A673 (cell line): ENCODE measurements at regions of chr4 and their contacts with region 1.

Region 1: DNA sequence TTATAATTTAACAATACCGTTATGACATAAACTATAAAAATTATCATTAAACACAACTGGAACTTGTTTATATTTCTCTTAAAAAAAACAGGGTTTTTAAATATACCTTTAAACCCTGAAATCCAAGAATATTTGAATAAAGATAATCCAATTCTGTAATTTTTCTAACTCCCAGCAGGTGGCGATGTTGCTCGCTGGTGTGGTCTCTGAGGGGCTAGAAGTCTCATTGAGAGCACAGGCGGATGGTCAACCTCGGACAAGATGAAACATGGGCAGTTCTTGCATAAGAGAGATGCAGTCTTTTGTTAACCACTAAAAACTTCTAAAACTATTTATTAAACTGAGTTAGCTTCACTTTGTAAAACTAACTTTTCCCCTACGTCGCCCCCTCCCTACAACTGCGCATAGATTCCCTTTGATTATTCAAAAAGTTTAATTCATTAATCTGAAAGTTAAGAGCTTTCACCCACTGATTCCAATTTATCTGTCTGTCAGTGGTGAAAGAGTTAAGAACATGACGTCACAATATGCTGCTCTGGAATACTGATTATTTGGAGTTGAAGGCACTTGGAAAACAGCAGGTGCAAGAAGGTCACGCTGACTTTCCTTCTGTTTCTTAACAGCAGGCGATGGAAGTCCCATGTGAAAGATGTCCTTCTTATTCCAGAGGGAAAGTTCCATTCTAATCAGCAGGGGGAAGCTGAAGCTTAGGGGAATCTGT is 29.5 kb downstream of the DMP1 start:
- DNase-seq: peak; percentile 49
- H3K4me3 ChIP-seq: no peak overlapping the region
- H3K27ac ChIP-seq: no peak overlapping the region
- H3K4me1 ChIP-seq: no peaks in the 10 kb centered on the region
- H3K27me3 ChIP-seq: no peaks in the 10 kb centered on the region
- CTCF ChIP-seq: peak; percentile 62

Region 2: GRCh38 chr4:87365343-87365742 is 314.3 kb before region 1 on chr4:
- CTCF ChIA-PET with region 1: no interaction called
- POLR2A ChIA-PET with region 1: no interaction called
- intact Hi-C with region 1: no loop called
- DNase-seq: no peak
- H3K4me3 ChIP-seq: no peak overlapping the region
- H3K27ac ChIP-seq: no peak overlapping the region
- H3K4me1 ChIP-seq: no peaks in the 10 kb centered on the region
- H3K27me3 ChIP-seq: no peaks in the 10 kb centered on the region
- CTCF ChIP-seq: no peak

Region 3: GRCh38 chr4:87543835-87544461 is 135.7 kb before region 1 on chr4:
- CTCF ChIA-PET with region 1: no interaction called
- POLR2A ChIA-PET with region 1: no interaction called
- intact Hi-C with region 1: loop called (anchors 10 kb)
- DNase-seq: peak; percentile 33
- H3K4me3 ChIP-seq: no peak overlapping the region
- H3K27ac ChIP-seq: no peak overlapping the region
- H3K4me1 ChIP-seq: no peaks in the 10 kb centered on the region
- H3K27me3 ChIP-seq: no peaks in the 10 kb centered on the region
- CTCF ChIP-seq: peak; percentile 57

Region 4: GRCh38 chr4:87838890-87839591 is 159.4 kb after region 1 on chr4:
- CTCF ChIA-PET with region 1: interaction called, 4 read pairs
- POLR2A ChIA-PET with region 1: no interaction called
- intact Hi-C with region 1: loop called (anchors 2 kb)
- DNase-seq: peak; percentile 42
- H3K4me3 ChIP-seq: no peak overlapping the region
- H3K27ac ChIP-seq: no peak overlapping the region
- H3K4me1 ChIP-seq: no peaks in the 10 kb centered on the region
- H3K27me3 ChIP-seq: no peaks in the 10 kb centered on the region
- CTCF ChIP-seq: peak; percentile 59

Region 5: GRCh38 chr4:88211473-88212252 is 532.1 kb after region 1 on chr4:
- CTCF ChIA-PET with region 1: no interaction called
- POLR2A ChIA-PET with region 1: no interaction called
- intact Hi-C with region 1: loop called (anchors 10 kb)
- DNase-seq: peak; percentile 40
- H3K4me3 ChIP-seq: no peak overlapping the region
- H3K27ac ChIP-seq: no peak overlapping the region
- H3K4me1 ChIP-seq: no peaks in the 10 kb centered on the region
- H3K27me3 ChIP-seq: no peaks in the 10 kb centered on the region
- CTCF ChIP-seq: peak; percentile 56